ENCODE measurements at regions of chr6 and their contacts with region 1.

Region 1: GRCh38 chr6:36885461-36886401 is at the start of gene C6orf89:
- DNase-seq: peak; percentile 95
- H3K4me3 Mint-ChIP-seq: peak within 1 kb of the TSS; percentile 87
- H3K27ac Mint-ChIP-seq: peak within 1 kb of the TSS; percentile 80
- H3K4me1 Mint-ChIP-seq: peaks cover 32% of the 10 kb centered on the region
- H3K27me3 Mint-ChIP-seq: no peaks in the 10 kb centered on the region
- total RNA-seq, gene C6orf89: 28.4 and 29.9 TPM in 2 replicates

Region 2: DNA sequence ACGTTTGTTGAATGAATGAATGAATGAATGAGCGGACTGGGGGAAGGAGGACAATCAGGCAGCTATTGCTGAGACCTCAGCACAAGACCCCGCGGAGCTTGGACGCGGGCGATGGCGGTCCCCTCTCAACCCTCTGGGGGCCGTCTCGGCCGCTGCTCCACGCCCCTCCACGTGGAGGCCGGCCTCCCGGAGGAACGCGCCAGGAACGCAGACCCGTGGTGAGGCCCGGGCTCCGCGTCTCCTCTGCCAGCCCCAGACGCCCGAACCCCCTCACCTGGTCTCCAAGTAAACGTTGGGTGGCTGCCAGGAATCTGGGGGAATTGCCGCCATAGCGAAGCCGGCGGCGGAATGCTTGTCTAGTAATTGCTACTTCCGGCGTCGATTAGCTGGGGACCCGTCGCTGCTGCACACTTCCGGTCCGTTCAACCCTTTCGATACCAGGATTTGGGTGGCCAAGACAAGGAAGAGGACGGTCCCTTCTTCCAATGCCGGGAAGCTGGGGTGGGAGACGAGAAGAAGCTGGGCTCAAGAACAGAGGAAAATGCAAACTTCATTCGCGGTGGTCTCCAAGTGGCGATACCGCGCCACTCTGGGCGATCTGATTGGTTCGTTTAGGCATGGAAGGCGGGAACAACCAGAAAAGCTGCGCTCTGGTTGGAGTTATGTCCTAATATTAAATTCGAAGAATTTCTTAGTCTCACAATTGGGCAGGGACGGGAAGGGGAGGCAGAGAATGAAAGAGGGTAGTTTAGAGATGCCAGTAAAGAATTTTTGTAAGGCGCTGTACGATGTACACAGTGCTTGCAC is 11.1 kb before region 1 on chr6 and contains the start of gene PPIL1:
- intact Hi-C with region 1: loop called (anchors 1 kb)
- DNase-seq: peak; percentile 80
- H3K4me3 Mint-ChIP-seq: peak within 1 kb of the TSS; percentile 99
- H3K27ac Mint-ChIP-seq: peak within 1 kb of the TSS; percentile 100
- H3K4me1 Mint-ChIP-seq: peaks cover 48% of the 10 kb centered on the region
- H3K27me3 Mint-ChIP-seq: peaks cover 3% of the 10 kb centered on the region
- total RNA-seq, gene PPIL1: 52.4 and 54.8 TPM in 2 replicates

Region 3: GRCh38 chr6:36929607-36930006 is 43.9 kb after region 1 on chr6:
- intact Hi-C with region 1: no loop called
- DNase-seq: no peak
- H3K4me3 Mint-ChIP-seq: no peak overlapping the region
- H3K27ac Mint-ChIP-seq: no peak overlapping the region
- H3K4me1 Mint-ChIP-seq: peaks cover 26% of the 10 kb centered on the region
- H3K27me3 Mint-ChIP-seq: no peaks in the 10 kb centered on the region

Region 4: GRCh38 chr6:36985808-36986703 is 100.3 kb after region 1 on chr6 and contains the start of gene MTCH1:
- intact Hi-C with region 1: loop called (anchors 5 kb)
- DNase-seq: peak; percentile 86
- H3K4me3 Mint-ChIP-seq: peak within 1 kb of the TSS; percentile 98
- H3K27ac Mint-ChIP-seq: peak within 1 kb of the TSS; percentile 96
- H3K4me1 Mint-ChIP-seq: peaks cover 16% of the 10 kb centered on the region
- H3K27me3 Mint-ChIP-seq: peaks cover 7% of the 10 kb centered on the region
- total RNA-seq, gene MTCH1: 117 and 119 TPM in 2 replicates